ENCODE measurements at regions of chr22 and their contacts with region 1.

Region 1: GRCh38 chr22:34851918-34852662 is 213.9 kb upstream of the ISX start:
- DNase-seq: no peak
- H3K4me3 ChIP-seq: no peak overlapping the region
- H3K27ac ChIP-seq: no peak overlapping the region
- H3K4me1 ChIP-seq: no peaks in the 10 kb centered on the region
- H3K27me3 ChIP-seq: peaks cover 4% of the 10 kb centered on the region
- CTCF ChIP-seq: no peak
- EP300 ChIP-seq: no peak
- POLR2A ChIP-seq: no peak

Region 2: DNA sequence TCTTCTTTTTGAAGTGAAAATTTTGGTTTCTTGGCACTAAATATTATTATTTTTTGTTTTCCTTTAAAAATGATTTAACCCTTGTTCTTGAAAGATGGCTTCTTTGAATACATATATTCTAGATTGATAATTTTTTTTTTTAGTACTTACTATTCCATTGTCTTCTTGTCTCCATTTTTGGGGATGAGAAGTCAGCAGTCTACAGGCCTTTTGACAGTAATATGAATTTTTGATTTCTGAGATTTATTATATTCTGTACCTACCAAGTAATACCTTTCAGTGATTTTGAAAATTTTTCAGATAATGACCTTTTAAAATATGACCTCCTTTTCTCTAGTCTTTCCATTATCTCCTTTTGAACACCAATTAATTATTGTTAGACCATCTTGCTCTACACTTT is 637.7 kb before region 1 on chr22:
- in situ Hi-C with region 1: no loop called
- intact Hi-C with region 1: no loop called
- DNase-seq: no peak
- H3K4me3 ChIP-seq: no peak overlapping the region
- H3K27ac ChIP-seq: no peak overlapping the region
- H3K4me1 ChIP-seq: no peaks in the 10 kb centered on the region
- H3K27me3 ChIP-seq: no peaks in the 10 kb centered on the region
- CTCF ChIP-seq: no peak
- EP300 ChIP-seq: no peak
- POLR2A ChIP-seq: no peak

Region 3: GRCh38 chr22:34475886-34476285 is 376.2 kb before region 1 on chr22:
- in situ Hi-C with region 1: no loop called
- intact Hi-C with region 1: no loop called
- DNase-seq: no peak
- H3K4me3 ChIP-seq: no peak overlapping the region
- H3K27ac ChIP-seq: no peak overlapping the region
- H3K4me1 ChIP-seq: no peaks in the 10 kb centered on the region
- H3K27me3 ChIP-seq: no peaks in the 10 kb centered on the region
- CTCF ChIP-seq: no peak
- EP300 ChIP-seq: no peak
- POLR2A ChIP-seq: no peak

Region 4: GRCh38 chr22:34914846-34915245 is 62.8 kb after region 1 on chr22:
- in situ Hi-C with region 1: no loop called
- intact Hi-C with region 1: loop called (anchors 2 kb)
- DNase-seq: no peak
- H3K4me3 ChIP-seq: no peak overlapping the region
- H3K27ac ChIP-seq: no peak overlapping the region
- H3K4me1 ChIP-seq: no peaks in the 10 kb centered on the region
- H3K27me3 ChIP-seq: peaks cover 4% of the 10 kb centered on the region
- CTCF ChIP-seq: no peak
- EP300 ChIP-seq: no peak
- POLR2A ChIP-seq: no peak

Region 5: GRCh38 chr22:35399678-35400334 is 547.7 kb after region 1 on chr22 and contains the start of gene MCM5:
- in situ Hi-C with region 1: no loop called
- intact Hi-C with region 1: no loop called
- DNase-seq: peak; percentile 98
- H3K4me3 ChIP-seq: peak within 1 kb of the TSS; percentile 65 to 99 (median 74)
- H3K27ac ChIP-seq: peak within 1 kb of the TSS; percentile 70 to 80 (median 78)
- H3K4me1 ChIP-seq: peaks cover 7 to 27% (median 12%) of the 10 kb centered on the region in 4 donors
- H3K27me3 ChIP-seq: no peaks in the 10 kb centered on the region
- CTCF ChIP-seq: no peak
- EP300 ChIP-seq: no peak
- POLR2A ChIP-seq: no peak
- total RNA-seq, gene MCM5: 11.6 to 26.6 (median 13.3) TPM

Measured in transverse colon (tissue), 4 donors.